Gastrocnemius medialis (tissue), 4 donors: ENCODE measurements at regions of chr20 and their contacts with region 1.

Region 1: GRCh38 chr20:9616833-9617489 is 102.6 kb downstream of the LAMP5 start:
- DNase-seq: peak; percentile 5 to 21
- ATAC-seq: peak; percentile 56 to 65
- H3K4me3 ChIP-seq: no peak overlapping the region
- H3K27ac ChIP-seq: no peak overlapping the region
- H3K4me1 ChIP-seq: no peaks in the 10 kb centered on the region
- H3K27me3 ChIP-seq: no peaks in the 10 kb centered on the region
- CTCF ChIP-seq: peak; percentile 45 to 78 (median 61)
- POLR2A ChIP-seq: no peak

Region 2: GRCh38 chr20:9739991-9740390 is 123.0 kb after region 1 on chr20:
- in situ Hi-C with region 1: no loop called
- intact Hi-C with region 1: no loop called
- DNase-seq: no peak
- ATAC-seq: no peak
- H3K4me3 ChIP-seq: no peak overlapping the region
- H3K27ac ChIP-seq: no peak overlapping the region
- H3K4me1 ChIP-seq: no peaks in the 10 kb centered on the region
- H3K27me3 ChIP-seq: no peaks in the 10 kb centered on the region
- CTCF ChIP-seq: no peak
- POLR2A ChIP-seq: no peak

Region 3: GRCh38 chr20:9912858-9913434 is 296.0 kb after region 1 on chr20:
- in situ Hi-C with region 1: loop called in 2 of 4 experiments (anchors 10 to 25 kb)
- intact Hi-C with region 1: no loop called
- DNase-seq: no peak
- ATAC-seq: no peak
- H3K4me3 ChIP-seq: no peak overlapping the region
- H3K27ac ChIP-seq: no peak overlapping the region
- H3K4me1 ChIP-seq: no peaks in the 10 kb centered on the region
- H3K27me3 ChIP-seq: peaks cover 0 to 3% (median 0%) of the 10 kb centered on the region in 3 donors
- CTCF ChIP-seq: peak in 4 of 5 experiments; percentile 25 to 77 (median 58)
- POLR2A ChIP-seq: no peak

Region 4: GRCh38 chr20:10090588-10091166 is 473.7 kb after region 1 on chr20:
- in situ Hi-C with region 1: loop called in 2 of 4 experiments (anchors 25 kb)
- intact Hi-C with region 1: no loop called
- DNase-seq: no peak
- ATAC-seq: peak in 1 of 2 donors; percentile 56
- H3K4me3 ChIP-seq: no peak overlapping the region
- H3K27ac ChIP-seq: no peak overlapping the region
- H3K4me1 ChIP-seq: no peaks in the 10 kb centered on the region
- H3K27me3 ChIP-seq: no peaks in the 10 kb centered on the region
- CTCF ChIP-seq: peak in 4 of 5 experiments; percentile 21 to 58 (median 54)
- POLR2A ChIP-seq: no peak

Region 5: DNA sequence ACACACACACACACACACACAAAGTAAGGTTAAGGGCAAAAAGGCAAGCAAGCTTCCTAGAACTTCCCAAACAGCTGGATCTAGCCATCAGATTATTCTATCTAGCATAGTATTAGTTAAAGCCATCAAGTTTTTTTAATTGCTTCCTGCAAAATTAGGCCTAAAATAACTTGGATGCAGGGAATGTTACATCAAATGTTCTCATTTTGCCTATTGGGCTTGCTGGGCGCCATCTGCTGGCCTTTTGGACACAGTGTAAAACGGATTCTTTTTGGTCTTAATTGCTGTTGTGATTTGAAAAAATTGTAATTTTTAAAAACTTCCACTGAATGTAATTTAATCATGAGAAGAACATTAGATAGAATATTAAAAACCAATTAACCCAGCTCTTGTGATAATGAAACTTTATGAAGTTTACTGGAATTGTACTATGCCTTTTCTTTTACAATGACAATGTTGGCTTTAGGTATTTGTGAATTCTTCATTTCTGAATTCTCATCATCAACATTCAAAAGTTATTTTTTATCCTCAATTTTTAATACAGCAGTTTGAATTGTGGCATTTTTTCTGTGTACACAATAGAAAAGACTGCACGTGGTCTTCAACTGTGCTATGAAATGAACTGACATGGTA is 810.2 kb after region 1 on chr20:
- in situ Hi-C with region 1: no loop called
- intact Hi-C with region 1: loop called (anchors 5 kb)
- DNase-seq: no peak
- ATAC-seq: no peak
- H3K4me3 ChIP-seq: no peak overlapping the region
- H3K27ac ChIP-seq: no peak overlapping the region
- H3K4me1 ChIP-seq: peaks cover 37 to 51% of the 10 kb centered on the region in 2 donors
- H3K27me3 ChIP-seq: no peaks in the 10 kb centered on the region
- CTCF ChIP-seq: peak; percentile 27 to 78 (median 51)
- POLR2A ChIP-seq: no peak